Caco-2 (cell line): ENCODE measurements at regions of chr13 and their contacts with region 1.

Region 1: GRCh38 chr13:26186118-26186870 is 35.8 kb downstream of the RNF6 start:
- DNase-seq: peak; percentile 97
- H3K4me3 ChIP-seq: peak overlapping the region; percentile 88
- H3K4me3 Mint-ChIP-seq: peak overlapping the region; percentile 97
- H3K27ac Mint-ChIP-seq: peak overlapping the region; percentile 77
- H3K4me1 ChIP-seq: no peaks in the 10 kb centered on the region
- H3K4me1 Mint-ChIP-seq: no peaks in the 10 kb centered on the region
- H3K27me3 ChIP-seq: no peaks in the 10 kb centered on the region
- H3K27me3 Mint-ChIP-seq: no peaks in the 10 kb centered on the region
- CTCF ChIP-seq: peak; percentile 70 to 95

Region 2: DNA sequence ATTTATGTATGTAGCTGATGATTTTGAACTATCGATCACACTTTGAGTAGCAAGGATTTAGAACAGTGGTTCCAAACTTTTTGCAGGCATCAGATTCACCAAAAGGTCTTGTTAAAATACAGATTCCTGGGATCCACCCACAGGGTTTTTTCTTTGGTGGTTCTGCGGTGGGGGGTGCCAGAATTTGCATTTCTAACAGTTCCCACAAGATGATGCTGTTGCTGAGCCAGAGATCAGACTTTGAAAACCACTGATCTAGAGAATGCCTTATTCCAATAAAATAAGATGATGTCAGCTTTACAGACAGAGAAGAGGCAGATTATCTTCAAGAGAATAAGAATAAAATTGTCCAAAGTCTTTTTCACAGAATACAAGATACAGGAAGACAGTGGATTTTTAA is 53.5 kb before region 1 on chr13:
- CTCF ChIA-PET with region 1: no interaction called
- POLR2A ChIA-PET with region 1: no interaction called
- intact Hi-C with region 1: no loop called
- DNase-seq: peak in 1 of 2 experiments; percentile 13
- H3K4me3 ChIP-seq: no peak overlapping the region
- H3K4me3 Mint-ChIP-seq: no peak overlapping the region
- H3K27ac Mint-ChIP-seq: no peak overlapping the region
- H3K4me1 ChIP-seq: no peaks in the 10 kb centered on the region
- H3K4me1 Mint-ChIP-seq: peaks cover 6% of the 10 kb centered on the region
- H3K27me3 ChIP-seq: no peaks in the 10 kb centered on the region
- H3K27me3 Mint-ChIP-seq: peaks cover 15% of the 10 kb centered on the region
- CTCF ChIP-seq: peak in 1 of 2 experiments; percentile 33

Region 3: GRCh38 chr13:26253787-26254582 is 67.7 kb after region 1 on chr13 and contains the start of gene CDK8:
- CTCF ChIA-PET with region 1: no interaction called
- POLR2A ChIA-PET with region 1: no interaction called
- intact Hi-C with region 1: loop called (anchors 1 kb)
- DNase-seq: peak; percentile 94
- H3K4me3 ChIP-seq: peak within 1 kb of the TSS; percentile 96
- H3K4me3 Mint-ChIP-seq: peak within 1 kb of the TSS; percentile 89
- H3K27ac Mint-ChIP-seq: peak within 1 kb of the TSS; percentile 91
- H3K4me1 ChIP-seq: no peaks in the 10 kb centered on the region
- H3K4me1 Mint-ChIP-seq: peaks cover 17% of the 10 kb centered on the region
- H3K27me3 ChIP-seq: no peaks in the 10 kb centered on the region
- H3K27me3 Mint-ChIP-seq: no peaks in the 10 kb centered on the region
- CTCF ChIP-seq: peak in 1 of 2 experiments; percentile 1
- total RNA-seq, gene CDK8: 35.1 and 35.9 TPM in 2 replicates

Region 4: GRCh38 chr13:26425443-26426358 is 239.4 kb after region 1 on chr13:
- CTCF ChIA-PET with region 1: interaction called, 6 read pairs
- POLR2A ChIA-PET with region 1: interaction called, 13 read pairs
- intact Hi-C with region 1: no loop called
- DNase-seq: no peak
- H3K4me3 ChIP-seq: no peak overlapping the region
- H3K4me3 Mint-ChIP-seq: peak overlapping the region; percentile 6
- H3K27ac Mint-ChIP-seq: peak overlapping the region; percentile 19
- H3K4me1 ChIP-seq: peaks cover 21% of the 10 kb centered on the region
- H3K4me1 Mint-ChIP-seq: peaks cover 24% of the 10 kb centered on the region
- H3K27me3 ChIP-seq: no peaks in the 10 kb centered on the region
- H3K27me3 Mint-ChIP-seq: no peaks in the 10 kb centered on the region
- CTCF ChIP-seq: no peak

Region 5: GRCh38 chr13:26601669-26602068 is 415.4 kb after region 1 on chr13:
- CTCF ChIA-PET with region 1: interaction called, 17 read pairs
- POLR2A ChIA-PET with region 1: no interaction called
- intact Hi-C with region 1: loop called (anchors 1 kb)
- DNase-seq: no peak
- H3K4me3 ChIP-seq: no peak overlapping the region
- H3K4me3 Mint-ChIP-seq: no peak overlapping the region
- H3K27ac Mint-ChIP-seq: no peak overlapping the region
- H3K4me1 ChIP-seq: no peaks in the 10 kb centered on the region
- H3K4me1 Mint-ChIP-seq: no peaks in the 10 kb centered on the region
- H3K27me3 ChIP-seq: no peaks in the 10 kb centered on the region
- H3K27me3 Mint-ChIP-seq: peaks cover 27% of the 10 kb centered on the region
- CTCF ChIP-seq: peak in 1 of 2 experiments; percentile 10

Region 6: DNA sequence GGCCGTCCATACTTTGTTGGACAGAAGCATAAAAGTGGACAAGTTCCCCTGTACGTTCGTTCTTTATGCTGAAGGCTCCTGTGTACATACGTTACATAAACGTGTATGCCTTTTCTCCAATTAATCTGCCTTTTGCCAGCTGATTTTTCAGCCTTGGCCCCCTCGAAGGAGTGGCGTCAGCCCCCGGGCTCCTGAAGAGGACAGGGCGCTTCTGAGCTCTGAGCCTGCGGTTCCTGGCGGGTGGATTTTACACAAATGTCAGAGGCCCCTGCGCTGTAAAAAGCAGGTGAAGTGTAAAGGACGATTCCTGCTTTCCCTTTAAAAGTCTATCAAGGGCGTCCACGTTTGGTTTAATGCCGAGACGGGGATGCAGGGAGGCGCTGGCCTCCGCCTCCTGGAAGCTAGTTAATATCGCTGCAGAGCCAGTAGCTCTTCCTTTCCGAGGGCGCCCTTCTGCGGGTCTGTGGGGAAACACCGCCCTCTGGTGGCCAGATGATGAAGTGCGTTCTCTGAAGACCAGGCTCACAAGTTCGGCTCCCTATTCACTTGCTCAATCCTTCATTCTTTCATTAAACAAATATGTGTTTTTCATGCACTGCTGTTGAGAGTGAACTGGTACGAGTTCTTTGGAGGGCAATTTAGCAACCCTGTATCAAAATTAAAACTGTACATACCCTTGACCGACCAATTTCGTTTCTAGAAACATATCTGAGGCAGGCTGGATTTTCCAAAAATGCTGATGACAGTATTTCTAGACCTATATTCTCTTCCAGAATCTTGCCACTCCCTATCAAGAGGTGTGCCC is 512.3 kb after region 1 on chr13:
- CTCF ChIA-PET with region 1: interaction called, 65 read pairs
- POLR2A ChIA-PET with region 1: no interaction called
- intact Hi-C with region 1: loop called (anchors 1 kb)
- DNase-seq: peak; percentile 78 to 88
- H3K4me3 ChIP-seq: no peak overlapping the region
- H3K4me3 Mint-ChIP-seq: no peak overlapping the region
- H3K27ac Mint-ChIP-seq: no peak overlapping the region
- H3K4me1 ChIP-seq: no peaks in the 10 kb centered on the region
- H3K4me1 Mint-ChIP-seq: no peaks in the 10 kb centered on the region
- H3K27me3 ChIP-seq: no peaks in the 10 kb centered on the region; the same call in 1 of the 2 replicates
- H3K27me3 Mint-ChIP-seq: peaks cover 25% of the 10 kb centered on the region
- CTCF ChIP-seq: peak; percentile 97